ENCODE measurements at regions of chr4 and their contacts with region 1.

Region 1: DNA sequence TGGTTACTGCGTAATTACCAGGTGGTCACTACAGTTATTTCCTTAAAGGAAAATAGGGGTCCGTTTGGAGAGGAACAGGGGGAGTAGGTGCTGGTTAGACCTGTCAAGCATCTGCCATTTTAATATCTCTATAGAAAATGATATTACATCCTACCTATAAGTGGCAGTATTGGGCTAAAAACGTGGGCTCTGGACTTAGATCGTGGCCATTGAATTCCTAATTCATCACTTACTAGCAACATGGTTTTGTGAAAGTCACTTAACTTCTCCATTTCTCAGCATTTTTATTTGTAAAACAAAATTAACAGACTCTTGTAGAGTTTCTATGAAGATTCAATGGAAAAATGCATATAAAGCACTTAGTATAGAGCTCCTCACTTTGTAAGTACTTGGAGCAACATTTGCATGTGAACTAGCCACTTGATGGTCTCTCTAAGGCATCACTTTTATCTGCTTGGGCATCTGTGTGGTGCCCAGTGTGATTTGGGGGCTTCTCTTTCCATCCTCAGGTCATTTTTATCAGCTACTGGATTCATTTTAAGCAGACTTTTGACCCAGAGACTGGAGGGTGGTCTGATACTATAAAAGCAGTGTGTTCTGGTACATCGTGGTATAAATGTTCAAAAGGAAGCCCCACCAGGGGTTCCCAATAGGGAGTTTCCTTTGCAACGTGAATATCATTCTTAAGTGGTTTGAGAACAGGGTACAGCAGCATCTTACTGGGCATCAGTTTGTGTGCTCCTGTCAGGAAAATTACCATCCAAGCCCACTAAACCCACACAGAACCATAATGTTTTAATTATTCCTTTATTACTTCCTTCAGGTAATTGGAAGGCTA is 42.7 kb upstream of the RASSF6 start:
- DNase-seq: no peak
- H3K4me3 Mint-ChIP-seq: no peak overlapping the region
- H3K27ac Mint-ChIP-seq: no peak overlapping the region
- H3K4me1 Mint-ChIP-seq: no peaks in the 10 kb centered on the region
- H3K27me3 Mint-ChIP-seq: no peaks in the 10 kb centered on the region

Region 2: GRCh38 chr4:73679836-73680235 is 16.9 kb after region 1 on chr4:
- CTCF ChIA-PET with region 1: no interaction called
- intact Hi-C with region 1: no loop called
- DNase-seq: no peak
- H3K4me3 Mint-ChIP-seq: no peak overlapping the region
- H3K27ac Mint-ChIP-seq: no peak overlapping the region
- H3K4me1 Mint-ChIP-seq: no peaks in the 10 kb centered on the region
- H3K27me3 Mint-ChIP-seq: no peaks in the 10 kb centered on the region

Region 3: DNA sequence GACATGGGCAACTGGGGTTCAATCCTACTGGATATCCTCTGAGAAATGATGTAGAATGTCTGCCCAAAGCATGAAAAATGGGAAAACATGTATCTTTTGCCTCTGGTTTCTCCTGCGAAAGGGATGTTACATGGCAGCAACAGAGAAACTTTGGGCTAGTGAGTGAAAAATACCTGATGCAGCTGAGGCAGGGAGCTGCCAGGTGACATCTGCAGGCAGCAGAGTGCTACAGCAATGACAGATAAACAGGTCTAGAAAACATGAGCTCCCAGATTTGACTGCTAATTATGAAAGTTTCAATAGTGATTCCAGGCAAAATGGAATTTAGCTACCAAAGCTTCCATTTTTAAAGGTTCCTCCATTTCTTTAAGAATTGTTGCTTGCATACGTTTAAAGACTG is 201.4 kb after region 1 on chr4:
- CTCF ChIA-PET with region 1: no interaction called
- intact Hi-C with region 1: loop called (anchors 2 kb)
- DNase-seq: no peak
- H3K4me3 Mint-ChIP-seq: no peak overlapping the region
- H3K27ac Mint-ChIP-seq: no peak overlapping the region
- H3K4me1 Mint-ChIP-seq: peaks cover 3% of the 10 kb centered on the region
- H3K27me3 Mint-ChIP-seq: peaks cover 11% of the 10 kb centered on the region

Measured in activated naive CD4-positive, alpha-beta T cell treated with anti-CD3 and anti-CD28 coated beads for 36 hours (primary cell).